Transverse colon (tissue), 4 donors: ENCODE measurements at regions of chr2 and their contacts with region 1.

Region 1: GRCh38 chr2:218033590-218034496 is 31.0 kb upstream of the TNS1 start:
- DNase-seq: no peak
- H3K4me3 ChIP-seq: peak overlapping the region in 1 of 4 donors; percentile 9
- H3K27ac ChIP-seq: no peak overlapping the region
- H3K4me1 ChIP-seq: peaks cover 0 to 5% (median 5%) of the 10 kb centered on the region in 4 donors
- H3K27me3 ChIP-seq: peaks cover 18% of the 10 kb centered on the region
- CTCF ChIP-seq: no peak
- EP300 ChIP-seq: no peak
- POLR2A ChIP-seq: no peak

Region 2: DNA sequence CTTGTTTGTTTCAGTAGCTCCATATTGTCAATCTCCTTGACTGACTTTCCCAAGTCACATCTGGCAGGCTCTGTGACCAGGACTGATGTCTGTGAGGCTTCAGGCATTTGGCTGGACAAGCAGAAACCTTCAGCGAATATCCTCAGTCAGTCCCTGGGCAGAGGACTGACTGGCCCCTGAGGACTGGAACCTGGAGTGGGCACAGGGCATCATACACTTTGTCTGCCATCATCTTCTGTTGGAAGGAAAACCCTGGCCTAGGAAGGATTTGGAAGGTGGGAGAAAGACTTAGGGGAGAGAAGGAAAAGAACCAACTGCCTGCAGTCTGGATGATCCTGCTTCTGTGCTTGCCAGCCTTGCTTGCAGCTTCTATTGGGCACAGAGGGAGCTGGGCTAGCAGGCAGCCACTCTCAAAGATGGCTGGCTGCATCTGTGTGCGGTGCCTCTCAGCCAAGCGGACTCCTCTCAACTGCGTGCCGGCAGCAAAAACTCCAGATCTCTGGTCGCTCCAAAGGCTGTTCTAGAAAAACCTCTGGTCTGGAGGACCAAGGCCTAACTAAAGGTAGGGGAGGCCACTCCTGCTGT is 1788.4 kb before region 1 on chr2:
- in situ Hi-C with region 1: no loop called
- intact Hi-C with region 1: no loop called
- DNase-seq: no peak
- H3K4me3 ChIP-seq: no peak overlapping the region
- H3K27ac ChIP-seq: no peak overlapping the region
- H3K4me1 ChIP-seq: no peaks in the 10 kb centered on the region
- H3K27me3 ChIP-seq: no peaks in the 10 kb centered on the region
- CTCF ChIP-seq: no peak
- EP300 ChIP-seq: no peak
- POLR2A ChIP-seq: no peak

Region 3: GRCh38 chr2:217934321-217935131 is 99.3 kb before region 1 on chr2:
- in situ Hi-C with region 1: no loop called
- intact Hi-C with region 1: no loop called
- DNase-seq: peak; percentile 60
- H3K4me3 ChIP-seq: peak overlapping the region in 2 of 4 donors; percentile 7 to 27
- H3K27ac ChIP-seq: peak overlapping the region; percentile 85 to 95 (median 89)
- H3K4me1 ChIP-seq: peaks cover 24 to 92% (median 61%) of the 10 kb centered on the region in 4 donors
- H3K27me3 ChIP-seq: no peaks in the 10 kb centered on the region
- CTCF ChIP-seq: no peak
- EP300 ChIP-seq: no peak
- POLR2A ChIP-seq: no peak

Region 4: GRCh38 chr2:218003981-218004419 is 29.8 kb before region 1 on chr2:
- in situ Hi-C with region 1: no loop called
- intact Hi-C with region 1: loop called (anchors 5 kb)
- DNase-seq: peak; percentile 53
- H3K4me3 ChIP-seq: no peak overlapping the region
- H3K27ac ChIP-seq: peak overlapping the region; percentile 65 to 77 (median 68)
- H3K4me1 ChIP-seq: peaks cover 0 to 22% (median under 1%) of the 10 kb centered on the region in 4 donors
- H3K27me3 ChIP-seq: peaks cover 15% of the 10 kb centered on the region
- CTCF ChIP-seq: no peak
- EP300 ChIP-seq: no peak
- POLR2A ChIP-seq: no peak

Region 5: GRCh38 chr2:218152765-218153164 is 118.9 kb after region 1 on chr2:
- in situ Hi-C with region 1: no loop called
- intact Hi-C with region 1: no loop called
- DNase-seq: no peak
- H3K4me3 ChIP-seq: no peak overlapping the region
- H3K27ac ChIP-seq: no peak overlapping the region
- H3K4me1 ChIP-seq: no peaks in the 10 kb centered on the region
- H3K27me3 ChIP-seq: no peaks in the 10 kb centered on the region
- CTCF ChIP-seq: no peak
- EP300 ChIP-seq: no peak
- POLR2A ChIP-seq: no peak

Region 6: GRCh38 chr2:218959141-218959731 is 925.4 kb after region 1 on chr2 and contains the start of gene CDK5R2:
- in situ Hi-C with region 1: no loop called
- intact Hi-C with region 1: no loop called
- DNase-seq: peak; percentile 81
- H3K4me3 ChIP-seq: peak within 1 kb of the TSS; percentile 1 to 56 (median 34)
- H3K27ac ChIP-seq: no peak within 1 kb of the TSS
- H3K4me1 ChIP-seq: peaks cover 0 to 18% (median 13%) of the 10 kb centered on the region in 4 donors
- H3K27me3 ChIP-seq: peaks cover 98% of the 10 kb centered on the region
- CTCF ChIP-seq: no peak
- EP300 ChIP-seq: no peak
- POLR2A ChIP-seq: no peak
- total RNA-seq, gene CDK5R2: 0.41 TPM in 1 of 4 donors, not detected in the others